Sigmoid colon (tissue), 7 donors: ENCODE measurements at regions of chr20 and their contacts with region 1.

Region 1: DNA sequence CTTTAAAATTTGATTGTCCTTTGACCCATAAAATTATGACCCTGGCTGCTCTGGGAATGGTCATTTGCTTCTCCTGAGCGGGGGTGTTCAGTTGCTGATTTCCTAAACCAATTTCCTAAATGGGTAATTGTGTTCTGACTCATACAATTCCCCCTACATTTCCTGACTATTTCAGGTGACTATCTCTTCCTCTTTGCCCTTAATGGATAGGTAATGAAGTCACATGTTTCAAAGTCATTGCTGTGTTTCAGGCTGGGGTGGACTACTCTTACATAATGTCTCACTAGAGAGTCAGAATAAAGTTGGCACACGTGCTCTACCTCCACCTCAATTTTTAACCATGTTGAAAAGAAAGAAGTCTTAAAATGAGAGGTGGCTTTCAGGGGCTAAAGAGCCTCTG is 109.8 kb downstream of the DOK5 start:
- DNase-seq: no peak
- H3K4me3 ChIP-seq: no peak overlapping the region
- H3K27ac ChIP-seq: no peak overlapping the region
- H3K4me1 ChIP-seq: no peaks in the 10 kb centered on the region
- H3K27me3 ChIP-seq: no peaks in the 10 kb centered on the region
- CTCF ChIP-seq: no peak
- EP300 ChIP-seq: no peak
- POLR2A ChIP-seq: no peak

Region 2: GRCh38 chr20:53276143-53276542 is 1309.1 kb before region 1 on chr20:
- intact Hi-C with region 1: no loop called
- DNase-seq: no peak
- H3K4me3 ChIP-seq: no peak overlapping the region
- H3K27ac ChIP-seq: no peak overlapping the region
- H3K4me1 ChIP-seq: peaks cover 0 to 4% (median 0%) of the 10 kb centered on the region in 4 donors
- H3K27me3 ChIP-seq: no peaks in the 10 kb centered on the region
- CTCF ChIP-seq: no peak
- EP300 ChIP-seq: no peak
- POLR2A ChIP-seq: no peak

Region 3: GRCh38 chr20:54479138-54479865 is 105.9 kb before region 1 on chr20:
- intact Hi-C with region 1: no loop called
- DNase-seq: no peak
- H3K4me3 ChIP-seq: no peak overlapping the region
- H3K27ac ChIP-seq: no peak overlapping the region
- H3K4me1 ChIP-seq: peaks cover 0 to 14% (median 12%) of the 10 kb centered on the region in 4 donors
- H3K27me3 ChIP-seq: peaks cover 0 to 9% (median 4%) of the 10 kb centered on the region in 3 donors
- CTCF ChIP-seq: no peak
- EP300 ChIP-seq: no peak
- POLR2A ChIP-seq: no peak

Region 4: GRCh38 chr20:54619181-54619580 is 34.0 kb after region 1 on chr20:
- intact Hi-C with region 1: no loop called
- DNase-seq: no peak
- H3K4me3 ChIP-seq: no peak overlapping the region
- H3K27ac ChIP-seq: no peak overlapping the region
- H3K4me1 ChIP-seq: no peaks in the 10 kb centered on the region
- H3K27me3 ChIP-seq: no peaks in the 10 kb centered on the region
- CTCF ChIP-seq: no peak
- EP300 ChIP-seq: no peak
- POLR2A ChIP-seq: no peak

Region 5: DNA sequence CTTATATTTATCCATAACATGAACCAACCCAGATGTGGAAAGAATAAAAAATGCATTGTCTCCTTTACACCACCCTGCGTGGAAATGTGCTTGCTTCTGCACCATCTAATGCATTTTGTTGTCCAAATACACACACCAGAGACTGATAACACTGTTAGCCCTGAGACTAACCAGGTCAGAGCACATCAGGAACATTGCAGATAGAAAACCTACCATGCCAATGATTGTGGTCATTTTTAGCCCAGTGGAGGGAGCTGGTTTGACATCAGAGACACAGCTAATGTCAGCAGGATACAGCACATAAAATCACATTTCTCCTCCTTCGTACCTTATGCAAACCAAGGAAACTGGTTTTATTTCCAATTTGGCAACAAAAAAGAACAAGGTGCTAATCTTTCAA is 418.8 kb after region 1 on chr20:
- intact Hi-C with region 1: loop called (anchors 10 kb)
- DNase-seq: no peak
- H3K4me3 ChIP-seq: no peak overlapping the region
- H3K27ac ChIP-seq: no peak overlapping the region
- H3K4me1 ChIP-seq: no peaks in the 10 kb centered on the region
- H3K27me3 ChIP-seq: no peaks in the 10 kb centered on the region
- CTCF ChIP-seq: no peak
- EP300 ChIP-seq: no peak
- POLR2A ChIP-seq: no peak